ENCODE measurements at regions of chr22 and their contacts with region 1.

Region 1: GRCh38 chr22:46674367-46674781 is 54.2 kb downstream of the GRAMD4 start:
- DNase-seq: peak; percentile 99
- H3K4me3 Mint-ChIP-seq: peak overlapping the region; percentile 87
- H3K27ac Mint-ChIP-seq: peak overlapping the region; percentile 98
- H3K4me1 Mint-ChIP-seq: peaks cover 45% of the 10 kb centered on the region
- H3K27me3 Mint-ChIP-seq: no peaks in the 10 kb centered on the region

Region 2: DNA sequence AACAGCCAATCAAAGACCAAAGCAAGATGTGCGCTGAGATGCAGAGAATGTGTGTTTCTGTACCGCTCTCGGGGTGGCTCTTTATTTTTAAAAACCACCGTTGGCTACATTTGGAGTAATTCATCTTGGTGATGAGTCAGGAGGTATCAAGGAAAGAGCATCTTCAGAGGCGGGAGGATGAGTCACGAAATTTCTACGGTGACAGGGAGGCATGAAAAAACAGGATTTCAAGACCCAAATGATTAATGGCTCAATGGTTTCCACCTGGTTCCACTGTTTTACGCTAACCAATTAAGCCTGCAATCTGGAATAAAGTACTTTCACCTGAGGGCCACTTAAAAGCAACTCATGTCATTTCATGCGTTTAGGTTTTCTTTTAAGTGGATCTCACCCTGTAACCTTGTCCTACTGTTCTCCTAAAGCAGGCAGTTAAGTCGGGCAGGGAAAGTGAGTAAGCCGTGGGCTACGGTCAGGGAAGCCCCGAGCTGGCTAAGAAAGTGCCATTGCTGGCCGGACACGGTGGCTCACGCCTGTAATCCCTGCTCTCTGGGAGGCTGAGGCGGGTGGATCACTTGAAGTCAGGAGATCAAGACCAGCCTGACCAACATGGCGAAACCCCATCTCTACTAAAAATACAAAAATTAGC is 211.5 kb before region 1 on chr22:
- CTCF ChIA-PET with region 1: no interaction called
- POLR2A ChIA-PET with region 1: no interaction called
- intact Hi-C with region 1: no loop called
- DNase-seq: no peak
- H3K4me3 Mint-ChIP-seq: no peak overlapping the region
- H3K27ac Mint-ChIP-seq: no peak overlapping the region
- H3K4me1 Mint-ChIP-seq: no peaks in the 10 kb centered on the region
- H3K27me3 Mint-ChIP-seq: peaks cover 3% of the 10 kb centered on the region

Region 3: GRCh38 chr22:46613606-46614021 is 60.8 kb before region 1 on chr22:
- CTCF ChIA-PET with region 1: no interaction called
- POLR2A ChIA-PET with region 1: interaction called, 3 read pairs
- intact Hi-C with region 1: loop called (anchors 1 kb)
- DNase-seq: peak; percentile 64
- H3K4me3 Mint-ChIP-seq: peak overlapping the region; percentile 84
- H3K27ac Mint-ChIP-seq: peak overlapping the region; percentile 91
- H3K4me1 Mint-ChIP-seq: peaks cover 26% of the 10 kb centered on the region
- H3K27me3 Mint-ChIP-seq: no peaks in the 10 kb centered on the region

Region 4: GRCh38 chr22:46652847-46653331 is 21.5 kb before region 1 on chr22:
- CTCF ChIA-PET with region 1: no interaction called
- POLR2A ChIA-PET with region 1: no interaction called
- intact Hi-C with region 1: loop called (anchors 1 kb)
- DNase-seq: no peak
- H3K4me3 Mint-ChIP-seq: no peak overlapping the region
- H3K27ac Mint-ChIP-seq: peak overlapping the region; percentile 68
- H3K4me1 Mint-ChIP-seq: peaks cover 28% of the 10 kb centered on the region
- H3K27me3 Mint-ChIP-seq: no peaks in the 10 kb centered on the region

Region 5: DNA sequence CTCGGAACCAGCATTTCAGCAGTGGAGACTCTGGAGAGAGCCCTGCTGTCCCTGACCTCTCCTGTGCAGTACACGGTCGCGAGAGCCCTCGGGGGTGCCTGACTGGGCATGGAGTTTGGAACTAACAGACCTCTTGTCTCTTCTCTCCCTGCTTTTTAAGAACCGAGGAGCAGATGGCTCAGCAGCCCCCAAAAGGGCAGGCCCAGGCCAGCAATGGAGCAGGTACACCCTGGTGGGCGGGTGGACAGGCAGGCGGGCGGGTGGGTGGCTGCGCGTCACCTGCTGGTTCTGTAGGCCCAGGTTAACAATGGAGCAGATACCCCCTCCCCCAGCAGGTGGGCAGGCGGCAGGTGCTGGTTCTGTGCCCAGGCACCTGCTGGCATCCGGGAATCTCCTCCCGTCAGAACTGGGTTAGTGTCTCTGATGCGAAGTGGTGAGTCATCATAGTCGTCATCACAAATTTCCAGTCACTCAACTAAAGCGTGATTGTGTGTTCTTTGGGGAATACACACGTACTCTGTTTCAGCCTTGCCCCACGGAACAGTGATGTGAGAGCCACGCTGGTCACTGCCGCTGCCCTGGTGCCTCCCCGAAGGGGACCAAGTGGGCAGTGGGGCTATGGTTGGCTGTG is 13.0 kb before region 1 on chr22:
- CTCF ChIA-PET with region 1: no interaction called
- POLR2A ChIA-PET with region 1: no interaction called
- intact Hi-C with region 1: loop called (anchors 1 kb)
- DNase-seq: peak; percentile 82
- H3K4me3 Mint-ChIP-seq: peak overlapping the region; percentile 57
- H3K27ac Mint-ChIP-seq: peak overlapping the region; percentile 94
- H3K4me1 Mint-ChIP-seq: peaks cover 23% of the 10 kb centered on the region
- H3K27me3 Mint-ChIP-seq: no peaks in the 10 kb centered on the region

Region 6: DNA sequence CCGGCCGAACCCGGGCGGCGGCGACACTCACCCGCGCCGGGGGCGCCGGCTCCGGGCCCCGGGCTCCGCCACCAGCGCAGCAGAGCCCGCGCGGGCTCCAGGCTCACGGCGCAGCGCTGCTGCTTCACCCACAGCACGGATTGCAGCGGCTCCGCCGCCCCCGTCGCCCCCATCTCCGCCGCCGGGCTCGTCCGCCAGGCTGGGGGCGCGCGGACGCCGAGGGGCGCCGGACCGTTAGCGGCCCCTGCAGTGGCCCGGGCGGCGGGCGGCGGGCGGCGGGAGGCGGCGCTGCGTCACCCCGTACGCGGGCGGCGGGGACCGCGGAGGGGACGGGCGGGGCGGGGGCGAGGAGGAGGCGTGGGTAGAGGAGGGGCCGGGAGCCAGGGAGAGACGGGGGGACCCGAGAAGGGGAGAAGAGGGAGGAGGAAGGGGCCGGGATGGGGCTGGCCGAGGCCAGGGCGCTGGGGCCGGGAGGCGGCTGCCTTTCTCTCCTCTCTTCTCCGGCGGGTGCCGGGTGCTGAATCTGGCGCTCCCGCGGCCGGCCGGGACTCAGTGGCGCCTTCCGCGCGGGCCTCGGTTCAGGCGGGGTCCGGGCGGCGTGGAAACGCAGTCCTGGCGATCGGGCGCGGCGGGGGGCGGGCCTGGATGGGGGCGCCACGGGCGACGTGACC is 63.7 kb after region 1 on chr22 and contains the start of gene CERK:
- CTCF ChIA-PET with region 1: no interaction called
- POLR2A ChIA-PET with region 1: no interaction called
- intact Hi-C with region 1: loop called (anchors 1 kb)
- DNase-seq: peak; percentile 72
- H3K4me3 Mint-ChIP-seq: peak within 1 kb of the TSS; percentile 96
- H3K27ac Mint-ChIP-seq: peak within 1 kb of the TSS; percentile 93
- H3K4me1 Mint-ChIP-seq: peaks cover 33% of the 10 kb centered on the region
- H3K27me3 Mint-ChIP-seq: no peaks in the 10 kb centered on the region
- total RNA-seq, gene CERK: 54.4 to 55.0 TPM

Region 7: GRCh38 chr22:46791201-46791731 is 116.9 kb after region 1 on chr22:
- CTCF ChIA-PET with region 1: no interaction called
- POLR2A ChIA-PET with region 1: no interaction called
- intact Hi-C with region 1: loop called (anchors 1 kb)
- DNase-seq: peak; percentile 86
- H3K4me3 Mint-ChIP-seq: peak overlapping the region; percentile 80
- H3K27ac Mint-ChIP-seq: peak overlapping the region; percentile 99
- H3K4me1 Mint-ChIP-seq: peaks cover 57% of the 10 kb centered on the region
- H3K27me3 Mint-ChIP-seq: no peaks in the 10 kb centered on the region